ENCODE measurements at regions of chr1 and their contacts with region 1.

Region 1: GRCh38 chr1:245079021-245079609 is 75.7 kb upstream of the KIF26B start:
- DNase-seq: peak; percentile 80
- H3K4me3 ChIP-seq: no peak overlapping the region
- H3K27ac ChIP-seq: no peak overlapping the region
- H3K4me1 ChIP-seq: no peaks in the 10 kb centered on the region
- H3K27me3 ChIP-seq: no peaks in the 10 kb centered on the region
- CTCF ChIP-seq: peak; percentile 36 to 58
- POLR2A ChIP-seq: no peak

Region 2: GRCh38 chr1:245298781-245299180 is 219.7 kb after region 1 on chr1:
- CTCF ChIA-PET with region 1: no interaction called
- POLR2A ChIA-PET with region 1: no interaction called
- dilution Hi-C with region 1: no loop called
- intact Hi-C with region 1: loop called (anchors 10 kb)
- DNase-seq: no peak
- H3K4me3 ChIP-seq: no peak overlapping the region
- H3K27ac ChIP-seq: no peak overlapping the region
- H3K4me1 ChIP-seq: no peaks in the 10 kb centered on the region
- H3K27me3 ChIP-seq: no peaks in the 10 kb centered on the region
- CTCF ChIP-seq: no peak
- POLR2A ChIP-seq: no peak

Region 3: DNA sequence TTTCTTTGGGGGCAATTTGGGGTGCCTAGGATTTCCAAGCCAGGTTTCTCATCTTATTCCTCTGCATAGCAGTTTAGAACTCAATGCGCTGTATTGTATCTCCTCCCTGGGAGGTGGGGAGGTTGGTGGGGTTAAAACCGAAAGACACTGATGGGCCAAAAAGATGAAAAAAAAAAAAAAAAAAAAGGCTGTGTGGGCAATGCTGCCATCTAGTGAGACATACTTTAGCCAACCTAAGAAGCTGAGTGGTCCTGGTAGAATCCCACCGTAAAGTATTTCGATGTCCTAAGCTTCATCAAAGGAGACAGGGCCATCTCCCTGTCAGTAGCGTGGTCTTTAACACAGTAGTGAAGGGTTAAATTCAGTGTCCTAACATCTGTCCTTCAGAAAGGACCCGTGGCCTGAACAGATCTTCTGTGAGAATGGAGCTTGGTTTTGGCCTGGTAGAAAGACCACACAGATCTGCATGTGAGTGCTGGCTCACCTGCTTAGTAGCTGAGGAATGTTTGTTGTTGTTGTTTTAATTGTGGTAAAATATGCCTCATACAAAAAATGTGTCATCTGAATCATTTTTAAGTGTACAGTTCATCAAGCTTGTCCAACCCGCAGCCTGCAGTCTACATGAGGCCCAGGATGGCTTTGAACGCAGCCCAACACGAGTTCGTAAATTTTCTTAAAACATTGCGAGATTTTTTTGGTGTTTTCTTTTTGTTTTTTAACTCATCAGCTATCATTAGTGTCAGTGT is 301.8 kb after region 1 on chr1:
- CTCF ChIA-PET with region 1: no interaction called
- POLR2A ChIA-PET with region 1: no interaction called
- dilution Hi-C with region 1: no loop called
- intact Hi-C with region 1: loop called (anchors 1 kb)
- DNase-seq: no peak
- H3K4me3 ChIP-seq: no peak overlapping the region
- H3K27ac ChIP-seq: no peak overlapping the region
- H3K4me1 ChIP-seq: no peaks in the 10 kb centered on the region
- H3K27me3 ChIP-seq: no peaks in the 10 kb centered on the region
- CTCF ChIP-seq: peak in 1 of 2 donors; percentile 26
- POLR2A ChIP-seq: no peak

Region 4: GRCh38 chr1:246002725-246003441 is 923.8 kb after region 1 on chr1:
- CTCF ChIA-PET with region 1: interaction called, 3 read pairs
- POLR2A ChIA-PET with region 1: no interaction called
- dilution Hi-C with region 1: no loop called
- intact Hi-C with region 1: loop called (anchors 1 kb)
- DNase-seq: peak; percentile 83
- H3K4me3 ChIP-seq: no peak overlapping the region
- H3K27ac ChIP-seq: no peak overlapping the region
- H3K4me1 ChIP-seq: no peaks in the 10 kb centered on the region
- H3K27me3 ChIP-seq: no peaks in the 10 kb centered on the region
- CTCF ChIP-seq: peak; percentile 70 to 77
- POLR2A ChIP-seq: no peak